PC-9 (cell line): ENCODE measurements at regions of chr9 and their contacts with region 1.

Region 1: DNA sequence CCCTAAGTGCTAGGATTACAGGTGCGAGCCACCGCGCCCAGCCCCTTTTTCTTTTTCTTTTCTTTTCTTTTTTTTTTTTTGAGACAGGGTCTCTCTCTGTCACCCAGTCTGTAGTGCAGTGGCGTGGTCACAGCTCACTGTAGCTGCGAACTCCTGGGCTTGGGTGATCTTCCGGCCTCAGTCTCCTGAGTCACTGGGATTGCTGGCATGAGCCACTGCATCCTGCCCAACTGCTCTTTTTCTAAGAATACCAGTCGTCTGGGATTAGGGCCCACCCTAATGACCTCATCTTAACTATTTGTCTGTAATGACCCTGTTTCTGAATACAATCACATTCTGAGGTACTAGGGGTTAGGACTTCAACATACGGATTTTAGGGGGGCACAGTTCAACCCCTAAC is 34.1 kb upstream of the NANS start:
- DNase-seq: no peak
- H3K4me3 ChIP-seq: no peak overlapping the region
- H3K27ac ChIP-seq: no peak overlapping the region
- H3K4me1 ChIP-seq: no peaks in the 10 kb centered on the region
- H3K27me3 ChIP-seq: no peaks in the 10 kb centered on the region
- CTCF ChIP-seq: no peak

Region 2: DNA sequence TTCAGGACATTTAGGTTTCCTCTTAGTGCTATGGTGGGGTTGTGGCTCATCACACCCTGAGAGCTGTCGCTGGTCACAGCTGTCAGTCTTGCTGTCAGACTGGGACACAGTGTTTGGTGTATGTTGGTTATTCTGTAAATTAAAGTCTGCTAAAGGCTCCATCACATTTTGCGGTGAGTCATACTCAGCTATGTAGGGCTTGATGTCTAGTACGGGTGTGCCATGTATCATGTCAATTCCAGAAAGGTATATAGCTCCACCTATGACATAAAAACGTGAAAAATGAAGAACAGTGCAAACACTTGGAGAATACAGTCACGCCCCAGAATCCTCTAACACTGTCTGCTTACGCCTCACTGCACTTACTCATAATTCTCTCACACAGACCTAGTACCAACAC is 112.1 kb before region 1 on chr9:
- CTCF ChIA-PET with region 1: no interaction called
- POLR2A ChIA-PET with region 1: interaction called, 20 read pairs
- intact Hi-C with region 1: no loop called
- DNase-seq: no peak
- H3K4me3 ChIP-seq: no peak overlapping the region
- H3K27ac ChIP-seq: no peak overlapping the region
- H3K4me1 ChIP-seq: no peaks in the 10 kb centered on the region
- H3K27me3 ChIP-seq: no peaks in the 10 kb centered on the region
- CTCF ChIP-seq: no peak

Region 3: DNA sequence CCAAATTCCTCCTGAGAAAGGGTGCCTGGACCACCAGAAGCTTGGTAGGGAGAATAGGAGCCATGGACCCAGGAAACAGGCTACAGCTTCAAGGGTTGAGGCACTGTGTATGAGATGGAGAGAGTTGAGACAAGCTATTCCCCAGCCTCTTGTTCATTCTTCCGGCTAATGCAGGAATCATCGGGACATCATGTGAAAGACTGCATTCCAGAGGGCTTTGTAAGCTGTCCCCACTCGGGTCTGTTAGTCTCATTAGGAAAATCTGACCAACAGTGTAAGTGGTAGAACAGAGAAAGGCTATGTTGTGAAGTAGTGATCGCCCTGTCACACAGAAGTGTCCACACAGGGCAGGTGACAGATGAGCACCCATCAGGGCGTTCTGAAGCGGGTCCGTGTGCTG is 604.8 kb after region 1 on chr9:
- CTCF ChIA-PET with region 1: no interaction called
- POLR2A ChIA-PET with region 1: no interaction called
- intact Hi-C with region 1: no loop called
- DNase-seq: no peak
- H3K4me3 ChIP-seq: no peak overlapping the region
- H3K27ac ChIP-seq: no peak overlapping the region
- H3K4me1 ChIP-seq: no peaks in the 10 kb centered on the region
- H3K27me3 ChIP-seq: no peaks in the 10 kb centered on the region
- CTCF ChIP-seq: no peak

Region 4: DNA sequence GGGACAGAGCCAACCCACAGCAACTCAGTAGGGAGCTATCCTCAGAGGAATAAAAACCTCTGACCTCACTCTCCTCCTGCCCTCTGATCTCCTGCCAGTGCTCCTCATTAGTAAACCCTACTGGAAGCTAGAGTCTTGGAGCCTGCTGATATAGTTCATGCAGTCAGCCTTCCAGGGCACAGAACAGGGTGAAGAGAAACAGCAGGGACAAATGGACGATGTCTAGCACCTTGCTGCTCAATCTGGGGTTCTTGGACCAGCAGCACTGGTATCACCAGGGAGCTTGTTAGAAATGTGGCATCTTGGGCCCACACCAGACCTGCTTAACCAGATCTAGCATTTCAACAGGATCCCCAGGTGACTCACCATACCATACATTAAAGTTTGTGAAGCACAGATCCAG is 779.5 kb after region 1 on chr9:
- CTCF ChIA-PET with region 1: interaction called, 13 read pairs
- POLR2A ChIA-PET with region 1: no interaction called
- intact Hi-C with region 1: no loop called
- DNase-seq: peak; percentile 53 to 90
- H3K4me3 ChIP-seq: no peak overlapping the region
- H3K27ac ChIP-seq: peak overlapping the region; percentile 21; the same call in 1 of the 2 replicates
- H3K4me1 ChIP-seq: peaks cover 66% of the 10 kb centered on the region
- H3K27me3 ChIP-seq: no peaks in the 10 kb centered on the region
- CTCF ChIP-seq: no peak